Cardiac septum (tissue), 1 donor: ENCODE measurements at regions of chr6 and their contacts with region 1.

Region 1: DNA sequence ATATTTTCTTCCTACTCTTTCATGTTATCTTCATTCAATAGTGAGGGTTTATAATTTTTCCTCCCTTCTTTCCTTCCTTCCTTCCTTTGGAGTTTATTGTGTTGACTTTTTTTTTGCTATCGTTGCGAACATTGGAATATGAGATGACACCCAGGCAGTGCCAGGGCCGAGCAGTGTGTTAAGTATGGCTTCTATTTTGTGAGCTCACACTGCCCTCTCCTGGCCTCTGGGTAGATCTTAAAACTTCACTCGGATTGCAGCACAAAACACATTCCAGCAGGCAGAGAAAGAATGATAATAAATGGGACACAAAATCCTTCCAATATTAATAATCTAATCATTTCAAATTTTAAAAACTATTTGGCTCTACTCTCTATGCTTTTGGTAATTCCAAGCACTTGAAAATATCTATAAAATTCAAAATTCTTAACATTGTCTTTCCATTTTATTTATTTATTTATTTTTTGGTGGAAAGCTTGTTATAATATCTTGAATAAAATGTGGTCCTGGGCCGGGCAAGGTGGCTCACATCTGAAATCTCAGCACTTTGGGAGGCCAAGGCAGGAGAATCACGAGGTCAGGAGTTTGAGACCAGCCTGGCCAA is 147.4 kb upstream of the OLIG3 start:
- DNase-seq: no peak

Region 2: DNA sequence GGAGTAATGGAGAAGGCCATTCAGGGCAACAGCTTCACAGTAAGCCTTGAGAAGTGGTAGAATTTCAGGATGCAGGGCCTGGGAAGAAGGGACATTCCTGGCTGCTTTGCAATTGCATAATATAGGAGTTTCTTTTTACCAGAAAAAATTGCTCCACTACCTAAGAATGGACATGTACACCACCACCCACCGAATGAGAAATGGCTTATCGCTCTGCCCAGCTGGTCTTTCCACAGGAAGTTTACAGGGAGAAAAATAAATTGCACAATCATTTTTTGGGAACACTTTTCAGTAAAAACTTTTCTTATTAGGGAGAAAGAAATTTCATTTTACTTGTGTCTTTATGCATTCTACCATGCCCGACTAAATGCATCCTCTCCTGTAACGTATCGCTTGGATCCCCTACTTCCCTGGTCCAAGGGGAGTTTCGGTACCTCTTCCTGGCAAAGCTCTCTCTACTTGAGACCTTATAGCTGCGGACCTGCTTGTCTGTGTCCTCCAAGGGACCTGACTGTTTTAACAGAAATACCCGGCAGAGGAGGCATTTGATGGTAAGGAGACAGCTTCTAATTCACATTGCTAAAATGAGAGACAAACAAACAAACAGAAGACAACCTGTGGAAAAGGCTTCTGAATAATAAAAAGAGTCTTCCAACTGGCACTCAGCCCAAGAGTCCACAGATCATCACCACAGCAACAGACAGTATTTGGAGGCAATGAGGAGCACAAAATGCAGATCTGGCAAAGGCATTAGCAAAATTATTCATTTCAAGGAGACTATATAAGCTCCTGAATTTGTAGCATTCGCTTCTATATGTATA is 903.5 kb before region 1 on chr6:
- intact Hi-C with region 1: loop called (anchors 10 kb)
- DNase-seq: no peak

Region 3: DNA sequence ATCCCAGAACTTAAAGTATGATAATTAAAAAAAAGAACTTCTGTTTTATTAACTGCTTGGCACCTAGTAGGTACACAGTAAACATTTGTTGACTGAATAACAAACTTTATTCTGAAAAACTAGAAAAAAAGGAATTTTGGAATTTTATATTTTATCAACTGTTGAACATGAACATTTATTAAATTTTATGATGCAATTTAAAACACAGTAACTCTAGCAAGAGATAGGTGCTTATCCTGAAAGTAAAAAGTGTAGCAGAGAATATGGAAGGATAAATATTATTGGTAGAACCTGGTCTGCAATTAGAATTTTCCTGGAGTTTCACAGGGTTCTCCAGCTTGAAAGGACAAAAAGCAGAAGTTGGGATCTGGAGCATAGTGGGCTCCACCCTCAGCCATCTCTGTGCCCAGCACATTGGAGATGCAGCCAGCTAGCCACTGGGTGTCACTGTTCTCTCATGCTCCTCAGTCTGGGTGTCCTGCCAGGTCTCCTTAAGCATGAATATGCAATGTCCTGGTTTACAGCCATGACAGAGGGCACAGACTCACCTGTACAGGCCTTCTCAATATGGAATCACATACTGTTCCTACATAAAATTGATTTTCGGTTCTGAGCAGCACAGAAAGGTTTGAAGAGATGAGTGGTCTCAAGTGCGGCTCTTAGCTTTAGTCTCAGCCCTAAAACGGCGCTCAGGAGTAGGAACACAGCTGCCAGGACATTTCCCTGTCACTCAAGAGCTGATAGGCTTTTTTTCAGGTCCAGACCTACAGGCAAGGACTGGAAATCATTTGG is 565.1 kb before region 1 on chr6:
- intact Hi-C with region 1: loop called (anchors 5 kb)
- DNase-seq: peak; percentile 87

Region 4: GRCh38 chr6:137094411-137095008 is 547.1 kb before region 1 on chr6:
- intact Hi-C with region 1: loop called (anchors 1 kb)
- DNase-seq: no peak

Region 5: DNA sequence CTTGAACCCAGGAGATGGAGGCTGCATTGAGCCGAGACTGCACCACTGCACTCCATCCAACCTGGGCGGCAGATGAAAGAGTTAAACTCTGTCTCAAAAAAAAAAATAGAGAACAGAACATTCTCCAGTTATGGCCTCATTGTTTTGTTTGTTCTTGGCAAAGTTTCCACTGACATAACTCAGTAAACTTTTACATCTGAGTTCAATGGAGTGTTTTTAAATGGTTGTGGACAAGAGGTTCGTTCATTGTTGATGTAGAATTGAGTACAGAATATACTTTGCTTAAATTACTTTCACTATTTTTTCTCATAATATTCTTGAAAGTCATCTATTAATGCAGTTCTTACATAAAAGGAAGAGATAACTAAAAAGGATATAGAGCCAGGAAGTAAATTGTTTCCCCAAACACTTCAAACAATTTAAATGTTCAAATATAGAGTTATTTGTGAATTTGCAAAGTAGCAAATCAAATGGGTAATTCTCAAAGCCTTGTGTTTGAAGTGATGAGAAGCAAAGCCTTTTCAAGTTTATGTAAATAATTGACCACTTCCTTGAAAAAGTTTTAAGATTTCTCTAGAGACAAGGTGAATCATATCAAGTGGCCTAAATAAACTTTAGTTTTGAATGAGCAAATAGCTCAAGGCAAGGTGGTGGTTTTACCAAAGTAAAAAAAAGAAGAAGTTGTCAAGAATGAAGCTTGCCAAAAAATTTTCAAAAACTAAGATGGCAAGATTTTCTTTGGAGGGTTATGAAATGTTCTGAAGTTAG is 380.0 kb before region 1 on chr6:
- intact Hi-C with region 1: loop called (anchors 5 kb)
- DNase-seq: no peak